A549 (cell line): ENCODE measurements at regions of chr2 and their contacts with region 1.

Region 1: DNA sequence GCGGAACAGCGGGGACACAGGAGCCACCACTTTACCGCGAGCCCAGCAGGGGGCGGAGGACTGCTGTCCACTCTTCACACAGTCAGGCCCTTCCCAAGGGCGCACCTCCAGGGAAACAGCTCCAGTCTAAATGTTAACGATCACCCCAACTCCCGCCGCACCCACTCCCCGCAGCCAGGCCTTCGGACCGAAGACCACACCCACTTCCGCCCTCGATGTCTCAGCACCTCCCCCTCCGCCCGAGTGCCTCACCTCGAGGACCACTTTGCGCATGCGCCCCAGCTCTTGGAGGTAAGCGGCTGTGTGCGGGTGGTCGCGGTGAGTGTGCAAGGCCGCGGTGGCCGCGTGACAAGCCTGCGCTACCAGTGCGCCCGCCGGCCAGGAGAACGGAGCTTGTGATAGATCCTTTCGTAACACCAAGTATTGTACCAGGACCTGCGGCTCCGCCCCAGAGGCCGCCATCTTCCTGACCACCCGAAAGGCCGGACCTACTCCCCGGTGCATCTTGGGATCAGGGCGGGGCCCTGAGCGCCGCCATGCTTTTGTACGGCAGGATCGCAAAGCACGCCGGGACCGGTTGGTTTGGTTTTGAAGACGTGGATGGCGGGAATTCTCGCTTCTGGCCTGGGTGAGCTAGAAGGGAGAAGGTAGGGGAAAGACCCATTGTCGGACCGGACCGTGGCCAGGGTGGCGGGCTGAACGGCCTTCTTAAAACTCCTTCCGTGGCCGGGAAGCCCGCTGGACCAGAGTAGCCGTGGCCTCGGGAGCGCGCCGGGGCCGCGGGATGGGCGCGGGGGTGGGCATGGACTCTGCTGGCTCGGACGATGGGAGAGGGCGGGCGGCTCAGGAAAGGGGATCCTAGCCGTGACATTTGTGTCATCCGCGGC is at the starts of genes CENPO and PTRHD1:
- DNase-seq: peak; percentile 96 to 99
- ATAC-seq: peak; percentile 91 to 95
- H3K4me3 ChIP-seq: peak within 1 kb of the TSS; percentile 73
- H3K27ac ChIP-seq: peak within 1 kb of the TSS; percentile 93 to 99
- H3K4me1 ChIP-seq: peaks cover 25% of the 10 kb centered on the region
- CTCF ChIP-seq: peak; percentile 68
- EP300 ChIP-seq: no peak
- POLR2A ChIP-seq: peak; percentile 90
- RAD21 ChIP-seq: peak; percentile 56 to 72
- polyA plus RNA-seq, gene CENPO: 52.4 and 62.0 TPM in 2 replicates
- polyA plus RNA-seq, gene PTRHD1: 86.6 and 141 TPM in 2 replicates

Region 2: DNA sequence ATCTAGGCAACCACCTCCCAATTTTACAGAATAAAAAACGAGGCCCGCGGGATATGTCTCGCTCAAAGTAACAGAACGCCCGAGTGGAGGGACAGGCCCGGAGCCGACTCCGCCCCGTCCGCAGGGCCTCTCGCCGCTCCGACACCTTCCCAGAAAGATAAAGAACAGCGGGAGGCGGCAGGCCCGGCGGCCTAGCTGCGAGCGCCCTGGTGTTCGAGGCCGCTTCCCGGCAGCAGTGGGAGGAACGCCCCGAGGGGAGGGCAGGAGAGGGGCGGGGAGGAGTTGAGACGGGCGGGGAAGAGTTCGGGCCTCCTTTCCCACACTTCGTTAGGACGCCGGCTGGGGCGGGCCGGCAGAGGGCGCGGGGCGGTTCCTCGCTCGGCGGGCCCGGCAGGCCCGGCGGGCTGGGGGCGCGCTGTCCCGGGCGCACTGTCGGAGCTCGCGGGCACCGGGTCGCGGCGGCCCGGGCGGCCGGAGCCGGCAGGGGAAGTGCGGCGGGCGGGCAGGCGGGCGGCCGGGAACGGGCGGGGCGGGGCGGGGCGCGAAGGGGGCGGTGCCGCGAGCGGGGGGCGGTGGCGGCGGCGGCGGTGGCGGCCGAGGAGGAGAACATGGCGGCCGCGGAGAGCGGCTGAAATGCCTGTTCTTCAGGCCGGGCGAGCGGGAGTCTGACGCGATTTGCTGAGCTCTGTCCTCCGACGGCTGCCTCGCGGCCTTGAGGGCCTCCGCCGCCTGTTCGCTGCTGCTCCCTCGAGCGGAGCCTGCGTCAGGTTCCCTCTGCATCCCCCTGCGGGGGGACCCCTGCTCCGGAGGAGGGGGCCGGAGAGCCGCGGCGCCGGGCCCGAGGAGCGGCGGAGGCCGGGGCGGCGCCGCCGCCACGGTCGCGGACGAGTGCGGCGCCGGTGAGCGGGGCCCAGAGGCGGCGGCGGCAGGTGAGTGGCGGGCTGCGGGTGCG is 302.2 kb before region 1 on chr2 and contains the start of gene NCOA1:
- CTCF ChIA-PET with region 1: interaction called, 6 read pairs
- POLR2A ChIA-PET with region 1: interaction called, 11 read pairs
- DNase-seq: peak; percentile 91 to 94
- ATAC-seq: peak; percentile 91 to 96
- H3K4me3 ChIP-seq: peak within 1 kb of the TSS; percentile 93
- H3K27ac ChIP-seq: peak within 1 kb of the TSS; percentile 82 to 94
- H3K4me1 ChIP-seq: peaks cover 20% of the 10 kb centered on the region
- CTCF ChIP-seq: peak; percentile 30; the same call in 1 of the 3 replicates
- EP300 ChIP-seq: no peak
- POLR2A ChIP-seq: peak; percentile 85
- RAD21 ChIP-seq: no peak
- polyA plus RNA-seq, gene NCOA1: 29.9 and 31.0 TPM in 2 replicates

Region 3: DNA sequence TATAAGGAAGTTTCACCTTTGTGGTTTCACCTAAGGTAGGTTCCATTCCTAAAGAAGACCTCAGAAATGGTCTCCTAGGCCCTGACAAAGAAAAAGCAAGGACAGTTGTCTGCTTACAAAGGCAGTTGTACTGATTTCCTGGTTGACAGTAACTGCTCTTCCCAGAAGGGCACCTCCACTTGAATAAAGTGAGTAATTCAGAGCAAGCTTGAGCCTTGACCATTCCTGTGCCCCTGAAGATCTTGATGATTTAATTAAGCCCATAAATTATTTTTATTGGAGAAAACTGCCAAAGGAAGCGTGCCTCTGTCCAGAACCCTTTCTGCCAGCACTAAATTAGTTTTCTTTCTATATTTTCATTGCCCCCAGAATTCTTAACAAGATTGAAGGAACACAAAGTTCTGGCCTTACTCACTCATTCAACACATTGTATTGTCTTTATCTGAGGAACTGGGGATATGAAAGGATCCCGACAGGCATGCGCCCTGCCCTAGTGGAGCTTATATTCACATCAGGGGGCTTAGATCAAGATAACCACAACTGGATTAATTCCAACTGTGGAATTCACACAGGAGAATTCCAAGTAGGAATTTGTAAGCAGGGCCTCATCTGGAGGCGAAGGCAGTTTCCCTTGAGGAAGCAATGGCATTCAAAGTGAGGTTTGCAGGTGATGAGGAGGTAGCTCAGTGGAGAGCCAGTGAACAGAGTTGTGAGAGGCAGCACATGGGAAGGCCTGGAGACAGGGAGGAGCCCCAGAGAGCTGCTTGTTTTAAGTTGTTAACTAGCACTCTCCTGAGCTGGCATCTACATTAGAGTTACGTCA is 21.1 kb before region 1 on chr2:
- CTCF ChIA-PET with region 1: interaction called, 34 read pairs
- POLR2A ChIA-PET with region 1: interaction called, 6 read pairs
- DNase-seq: no peak
- ATAC-seq: peak in 1 of 2 experiments; percentile 24; a peak in 1 of 6 replicates
- H3K4me3 ChIP-seq: no peak overlapping the region
- H3K27ac ChIP-seq: no peak overlapping the region
- H3K4me1 ChIP-seq: no peaks in the 10 kb centered on the region
- CTCF ChIP-seq: no peak
- EP300 ChIP-seq: no peak
- POLR2A ChIP-seq: no peak
- RAD21 ChIP-seq: no peak

Region 4: GRCh38 chr2:24779116-24779515 is 14.0 kb before region 1 on chr2:
- CTCF ChIA-PET with region 1: interaction called, 34 read pairs
- POLR2A ChIA-PET with region 1: interaction called, 9 read pairs
- DNase-seq: peak in 1 of 2 experiments; percentile 25
- ATAC-seq: no peak
- H3K4me3 ChIP-seq: no peak overlapping the region
- H3K27ac ChIP-seq: no peak overlapping the region
- H3K4me1 ChIP-seq: no peaks in the 10 kb centered on the region
- CTCF ChIP-seq: no peak
- EP300 ChIP-seq: no peak
- POLR2A ChIP-seq: no peak
- RAD21 ChIP-seq: no peak

Region 5: DNA sequence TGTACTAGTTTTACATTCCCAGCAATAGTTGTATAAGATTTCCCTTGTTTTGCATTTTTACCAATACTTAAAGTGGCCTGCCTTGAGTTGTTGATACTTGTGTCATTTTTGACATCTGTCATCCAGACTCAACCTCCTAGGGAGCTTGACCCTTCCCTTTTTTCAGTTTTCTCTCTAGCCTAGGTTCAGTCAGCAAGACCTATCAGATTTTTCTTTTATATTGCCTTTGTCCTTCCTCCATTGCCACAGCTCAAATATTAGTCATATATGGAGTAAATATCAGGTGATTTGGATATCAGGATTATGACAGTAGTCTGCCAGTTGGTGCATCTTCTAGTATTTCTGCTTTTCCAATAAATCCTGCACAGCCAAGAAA is 13.5 kb after region 1 on chr2:
- CTCF ChIA-PET with region 1: interaction called, 17 read pairs
- POLR2A ChIA-PET with region 1: interaction called, 17 read pairs
- DNase-seq: no peak
- ATAC-seq: peak; percentile 72 to 83
- H3K4me3 ChIP-seq: peak overlapping the region; percentile 48
- H3K27ac ChIP-seq: peak overlapping the region; percentile 76 to 86
- H3K4me1 ChIP-seq: peaks cover 49% of the 10 kb centered on the region
- CTCF ChIP-seq: no peak
- EP300 ChIP-seq: no peak
- POLR2A ChIP-seq: no peak
- RAD21 ChIP-seq: no peak

Region 6: GRCh38 chr2:24816884-24817283 is 23.8 kb after region 1 on chr2:
- CTCF ChIA-PET with region 1: interaction called, 14 read pairs
- POLR2A ChIA-PET with region 1: interaction called, 7 read pairs
- DNase-seq: no peak
- ATAC-seq: no peak
- H3K4me3 ChIP-seq: no peak overlapping the region
- H3K27ac ChIP-seq: peak overlapping the region in 1 of 2 experiments; percentile 6; a peak in 1 of 6 replicates
- H3K4me1 ChIP-seq: peaks cover 10% of the 10 kb centered on the region
- CTCF ChIP-seq: no peak
- EP300 ChIP-seq: no peak
- POLR2A ChIP-seq: no peak
- RAD21 ChIP-seq: no peak

Region 7: GRCh38 chr2:24827321-24828237 is 34.5 kb after region 1 on chr2:
- CTCF ChIA-PET with region 1: interaction called, 61 read pairs
- POLR2A ChIA-PET with region 1: interaction called, 8 read pairs
- DNase-seq: peak; percentile 90 to 95
- ATAC-seq: peak; percentile 84 to 91
- H3K4me3 ChIP-seq: no peak overlapping the region
- H3K27ac ChIP-seq: peak overlapping the region in 1 of 2 experiments; percentile 1; a peak in 1 of 6 replicates
- H3K4me1 ChIP-seq: 0 out of 3 replicates have a peak, but pooled peaks cover 2% of the 10 kb centered on the region
- CTCF ChIP-seq: peak; percentile 93
- EP300 ChIP-seq: no peak
- POLR2A ChIP-seq: no peak
- RAD21 ChIP-seq: peak; percentile 95 to 97

Region 8: GRCh38 chr2:24943427-24944053 is 150.4 kb after region 1 on chr2:
- CTCF ChIA-PET with region 1: no interaction called
- POLR2A ChIA-PET with region 1: no interaction called
- DNase-seq: no peak
- ATAC-seq: no peak
- H3K4me3 ChIP-seq: no peak overlapping the region
- H3K27ac ChIP-seq: no peak overlapping the region
- H3K4me1 ChIP-seq: no peaks in the 10 kb centered on the region
- CTCF ChIP-seq: no peak
- EP300 ChIP-seq: no peak
- POLR2A ChIP-seq: no peak
- RAD21 ChIP-seq: no peak